OCI-LY7 (cell line): ENCODE measurements at regions of chr19 and their contacts with region 1.

Region 1: DNA sequence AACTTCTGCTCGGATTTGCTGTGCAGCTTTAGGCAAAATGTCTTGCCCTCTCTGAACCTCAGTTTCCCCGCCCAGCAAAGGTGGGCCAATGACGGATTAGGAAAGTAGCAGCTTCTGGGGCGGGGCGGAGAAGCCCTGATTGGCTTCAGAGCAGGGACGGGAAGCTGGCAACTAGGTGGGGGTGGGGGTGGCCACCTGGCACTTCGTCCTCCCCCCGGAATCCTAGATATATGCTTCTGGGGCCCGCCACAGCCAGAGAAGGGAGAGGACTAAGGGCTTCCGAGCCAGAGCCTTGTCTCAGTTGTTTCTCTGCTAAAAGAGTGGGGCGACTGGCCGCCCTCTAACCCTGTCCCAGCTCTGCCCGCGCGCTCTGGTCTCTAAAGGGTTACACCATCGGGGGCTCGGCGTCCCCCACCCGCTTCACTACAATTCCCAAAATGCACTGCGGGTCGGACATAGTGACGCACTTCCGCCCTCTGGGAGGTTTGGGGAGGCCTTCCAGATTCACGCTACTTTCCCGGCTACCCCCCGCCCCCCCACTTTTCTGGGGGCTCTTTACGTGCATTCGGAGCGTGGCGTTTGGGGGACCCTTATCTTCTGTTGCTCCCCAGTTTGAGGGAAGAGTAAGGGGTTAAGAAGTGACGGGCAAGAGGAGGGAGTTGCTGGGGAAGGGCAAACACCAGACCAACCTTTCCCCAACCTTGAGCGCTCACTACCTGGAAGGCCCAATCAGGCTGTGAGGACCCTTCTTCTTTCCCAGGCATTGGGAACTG is 672 bp upstream of the IRF2BP1 start:
- DNase-seq: peak; percentile 94
- H3K4me3 ChIP-seq: peak overlapping the region; percentile 98
- H3K27ac ChIP-seq: peak overlapping the region; percentile 75
- H3K4me1 ChIP-seq: peaks cover 40% of the 10 kb centered on the region
- CTCF ChIP-seq: no peak

Region 2: GRCh38 chr19:45705115-45705514 is 181.5 kb before region 1 on chr19:
- CTCF ChIA-PET with region 1: no interaction called
- POLR2A ChIA-PET with region 1: no interaction called
- intact Hi-C with region 1: loop called (anchors 10 kb)
- DNase-seq: no peak
- H3K4me3 ChIP-seq: no peak overlapping the region
- H3K27ac ChIP-seq: peak overlapping the region; percentile 43
- H3K4me1 ChIP-seq: peaks cover 48% of the 10 kb centered on the region
- CTCF ChIP-seq: no peak

Region 3: DNA sequence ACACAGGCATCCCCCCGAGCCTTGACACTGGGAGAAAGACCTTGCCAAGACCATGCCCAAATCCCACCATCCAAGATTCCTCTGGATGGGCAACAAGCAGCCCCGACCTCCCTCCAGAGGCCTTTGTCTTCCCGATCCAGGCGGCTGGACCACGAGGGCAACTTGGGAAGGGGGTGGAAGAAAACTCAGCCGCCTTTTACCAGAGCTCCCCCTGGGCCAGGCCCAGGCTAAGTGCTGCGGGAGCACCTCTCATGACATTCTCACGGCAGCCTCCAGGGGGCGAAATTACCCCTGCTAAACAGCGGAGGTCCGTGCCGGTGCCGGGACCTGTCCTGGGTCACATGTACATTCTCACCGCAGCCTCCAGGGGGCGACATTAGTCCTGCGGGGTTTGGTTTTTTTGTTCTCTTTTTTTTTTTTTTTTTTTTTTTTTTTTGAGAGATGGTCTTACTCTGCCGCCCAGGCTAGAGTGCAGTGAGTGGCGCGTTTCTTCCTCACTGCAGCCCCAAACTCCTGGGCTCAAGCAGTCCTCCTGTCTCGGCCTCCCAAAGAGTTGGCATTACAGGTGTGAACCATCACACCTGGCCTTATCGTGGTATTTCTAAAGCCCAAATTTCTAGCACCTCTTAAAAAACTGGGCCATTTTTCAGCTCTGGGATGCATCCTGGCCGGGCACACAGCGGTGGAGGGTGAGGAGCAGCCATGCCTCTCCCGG is 69.4 kb before region 1 on chr19:
- CTCF ChIA-PET with region 1: interaction called, 3 read pairs
- POLR2A ChIA-PET with region 1: no interaction called
- intact Hi-C with region 1: loop called (anchors 1 kb)
- DNase-seq: peak; percentile 96
- H3K4me3 ChIP-seq: no peak overlapping the region
- H3K27ac ChIP-seq: no peak overlapping the region
- H3K4me1 ChIP-seq: peaks cover 5% of the 10 kb centered on the region
- CTCF ChIP-seq: peak; percentile 97

Region 4: GRCh38 chr19:45848922-45849321 is 37.7 kb before region 1 on chr19:
- CTCF ChIA-PET with region 1: no interaction called
- POLR2A ChIA-PET with region 1: no interaction called
- intact Hi-C with region 1: no loop called
- DNase-seq: peak; percentile 11
- H3K4me3 ChIP-seq: no peak overlapping the region
- H3K27ac ChIP-seq: no peak overlapping the region
- H3K4me1 ChIP-seq: no peaks in the 10 kb centered on the region
- CTCF ChIP-seq: peak; percentile 65

Region 5: GRCh38 chr19:45862564-45863334 is 23.9 kb before region 1 on chr19 and contains the start of gene SYMPK:
- CTCF ChIA-PET with region 1: interaction called, 4 read pairs
- POLR2A ChIA-PET with region 1: interaction called, 6 read pairs
- intact Hi-C with region 1: loop called (anchors 1 kb)
- DNase-seq: peak; percentile 99
- H3K4me3 ChIP-seq: peak within 1 kb of the TSS; percentile 82
- H3K27ac ChIP-seq: peak within 1 kb of the TSS; percentile 83
- H3K4me1 ChIP-seq: peaks cover 20% of the 10 kb centered on the region
- CTCF ChIP-seq: no peak
- total RNA-seq, gene SYMPK: 84.4 and 116 TPM in 2 replicates